Posterior vena cava (tissue), 2 donors: ENCODE measurements at regions of chr6 and their contacts with region 1.

Region 1: DNA sequence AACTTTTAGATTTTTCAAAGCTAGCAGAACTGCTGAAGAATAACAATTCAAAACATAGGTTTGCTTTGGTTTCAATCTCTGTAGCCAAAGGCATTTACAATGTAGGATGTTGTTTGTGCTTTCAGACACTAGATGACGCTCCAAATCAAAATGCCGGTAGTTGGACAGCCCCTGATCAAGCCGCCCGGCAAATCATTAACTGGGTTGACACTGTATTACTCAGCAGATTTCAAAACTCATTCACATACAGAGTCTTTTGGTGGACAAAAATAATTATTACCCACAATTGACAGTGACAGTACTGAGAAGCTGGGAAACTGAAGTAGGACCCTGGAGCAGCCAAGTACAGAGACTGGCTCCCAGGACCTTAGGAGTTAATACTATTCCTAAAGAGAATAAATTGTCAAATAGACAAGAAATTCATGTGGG is 21.3 kb upstream of the HFE start:
- DNase-seq: no peak

Region 2: GRCh38 chr6:26003102-26003694 is 62.8 kb before region 1 on chr6:
- intact Hi-C with region 1: no loop called
- DNase-seq: no peak

Region 3: DNA sequence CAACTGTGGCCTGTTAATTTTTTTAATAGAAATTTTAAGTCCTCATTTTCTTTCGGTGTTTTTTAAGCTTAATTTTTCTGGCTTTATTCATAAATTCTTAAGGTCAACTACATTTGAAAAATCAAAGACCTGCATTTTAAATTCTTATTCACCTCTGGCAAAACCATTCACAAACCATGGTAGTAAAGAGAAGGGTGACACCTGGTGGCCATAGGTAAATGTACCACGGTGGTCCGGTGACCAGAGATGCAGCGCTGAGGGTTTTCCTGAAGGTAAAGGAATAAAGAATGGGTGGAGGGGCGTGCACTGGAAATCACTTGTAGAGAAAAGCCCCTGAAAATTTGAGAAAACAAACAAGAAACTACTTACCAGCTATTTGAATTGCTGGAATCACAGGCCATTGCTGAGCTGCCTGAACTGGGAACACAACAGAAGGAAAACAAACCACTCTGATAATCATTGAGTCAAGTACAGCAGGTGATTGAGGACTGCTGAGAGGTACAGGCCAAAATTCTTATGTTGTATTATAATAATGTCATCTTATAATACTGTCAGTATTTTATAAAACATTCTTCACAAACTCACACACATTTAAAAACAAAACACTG is 31.4 kb after region 1 on chr6:
- intact Hi-C with region 1: loop called (anchors 2 kb)
- DNase-seq: no peak